CD4-positive, alpha-beta T cell (primary cell): ENCODE measurements at regions of chr11 and their contacts with region 1.

Region 1: GRCh38 chr11:67118801-67119584 is at the start of gene KDM2A:
- DNase-seq: peak; percentile 97 to 100 (median 99)
- ATAC-seq: peak; percentile 80
- H3K4me3 ChIP-seq: peak within 1 kb of the TSS; percentile 94
- H3K4me3 Mint-ChIP-seq: peak within 1 kb of the TSS; percentile 94
- H3K27ac ChIP-seq: peak within 1 kb of the TSS; percentile 77 to 78
- H3K27ac Mint-ChIP-seq: peak within 1 kb of the TSS; percentile 91
- H3K4me1 ChIP-seq: peaks cover 17% of the 10 kb centered on the region
- H3K4me1 Mint-ChIP-seq: peaks cover 35% of the 10 kb centered on the region
- H3K27me3 ChIP-seq: no peaks in the 10 kb centered on the region
- H3K27me3 Mint-ChIP-seq: no peaks in the 10 kb centered on the region
- CTCF ChIP-seq: no peak
- total RNA-seq, gene KDM2A: 410 to 412 TPM

Region 2: GRCh38 chr11:66958232-66958955 is 160.6 kb before region 1 on chr11 and contains the start of gene PC:
- CTCF ChIA-PET with region 1: no interaction called
- POLR2A ChIA-PET with region 1: interaction called, 3 read pairs
- intact Hi-C with region 1: loop called in 1 of 2 experiments (anchors 5 kb)
- DNase-seq: peak; percentile 91 to 99 (median 96)
- ATAC-seq: peak; percentile 96
- H3K4me3 ChIP-seq: peak within 1 kb of the TSS; percentile 57
- H3K4me3 Mint-ChIP-seq: peak within 1 kb of the TSS; percentile 91
- H3K27ac ChIP-seq: peak within 1 kb of the TSS; percentile 33 to 41
- H3K27ac Mint-ChIP-seq: peak within 1 kb of the TSS; percentile 71
- H3K4me1 ChIP-seq: peaks cover 20% of the 10 kb centered on the region
- H3K4me1 Mint-ChIP-seq: peaks cover 21% of the 10 kb centered on the region
- H3K27me3 ChIP-seq: no peaks in the 10 kb centered on the region
- H3K27me3 Mint-ChIP-seq: no peaks in the 10 kb centered on the region
- CTCF ChIP-seq: no peak
- total RNA-seq, gene PC: 5.1 to 7.1 TPM

Region 3: DNA sequence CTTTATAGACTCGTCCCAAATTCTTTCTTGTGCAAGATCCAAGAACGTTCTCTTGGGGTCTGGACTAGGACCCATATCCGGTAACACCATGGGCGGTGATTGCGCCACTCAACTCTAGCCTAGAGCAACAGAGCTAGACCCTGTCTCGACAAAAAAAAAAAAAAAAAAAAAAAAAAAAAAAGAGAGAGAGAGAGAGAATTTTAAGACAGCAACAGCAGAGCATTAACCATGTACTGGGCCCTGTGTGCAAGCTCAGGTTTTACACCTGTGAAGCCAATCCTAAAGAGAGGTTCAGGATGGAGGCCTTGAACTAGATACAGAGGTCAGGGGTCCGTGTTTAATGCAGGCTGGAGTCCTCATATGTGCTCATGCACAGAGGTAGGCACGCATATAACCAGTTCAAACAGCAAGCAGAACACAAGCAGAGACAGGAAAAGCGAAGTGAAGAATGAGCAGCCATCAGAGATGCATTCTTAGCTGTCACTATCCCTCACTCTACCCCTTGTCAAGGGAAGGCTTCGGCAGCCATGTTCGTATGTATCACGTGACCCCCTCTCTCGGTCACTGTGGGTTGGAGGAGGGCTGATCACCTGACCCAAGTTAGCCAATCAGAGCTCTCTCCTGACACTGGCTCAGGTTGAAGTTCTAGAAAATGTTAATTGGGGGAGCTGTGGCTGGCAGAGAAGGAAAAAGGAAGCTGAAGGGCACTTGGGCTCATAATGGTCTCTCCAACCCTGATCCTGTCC is 112.7 kb before region 1 on chr11:
- CTCF ChIA-PET with region 1: no interaction called
- POLR2A ChIA-PET with region 1: no interaction called
- intact Hi-C with region 1: no loop called
- DNase-seq: peak in 3 of 14 experiments; percentile 16 to 56 (median 28)
- ATAC-seq: no peak
- H3K4me3 ChIP-seq: no peak overlapping the region
- H3K4me3 Mint-ChIP-seq: no peak overlapping the region
- H3K27ac ChIP-seq: no peak overlapping the region
- H3K27ac Mint-ChIP-seq: no peak overlapping the region
- H3K4me1 ChIP-seq: no peaks in the 10 kb centered on the region
- H3K4me1 Mint-ChIP-seq: no peaks in the 10 kb centered on the region
- H3K27me3 ChIP-seq: no peaks in the 10 kb centered on the region
- H3K27me3 Mint-ChIP-seq: no peaks in the 10 kb centered on the region
- CTCF ChIP-seq: no peak

Region 4: DNA sequence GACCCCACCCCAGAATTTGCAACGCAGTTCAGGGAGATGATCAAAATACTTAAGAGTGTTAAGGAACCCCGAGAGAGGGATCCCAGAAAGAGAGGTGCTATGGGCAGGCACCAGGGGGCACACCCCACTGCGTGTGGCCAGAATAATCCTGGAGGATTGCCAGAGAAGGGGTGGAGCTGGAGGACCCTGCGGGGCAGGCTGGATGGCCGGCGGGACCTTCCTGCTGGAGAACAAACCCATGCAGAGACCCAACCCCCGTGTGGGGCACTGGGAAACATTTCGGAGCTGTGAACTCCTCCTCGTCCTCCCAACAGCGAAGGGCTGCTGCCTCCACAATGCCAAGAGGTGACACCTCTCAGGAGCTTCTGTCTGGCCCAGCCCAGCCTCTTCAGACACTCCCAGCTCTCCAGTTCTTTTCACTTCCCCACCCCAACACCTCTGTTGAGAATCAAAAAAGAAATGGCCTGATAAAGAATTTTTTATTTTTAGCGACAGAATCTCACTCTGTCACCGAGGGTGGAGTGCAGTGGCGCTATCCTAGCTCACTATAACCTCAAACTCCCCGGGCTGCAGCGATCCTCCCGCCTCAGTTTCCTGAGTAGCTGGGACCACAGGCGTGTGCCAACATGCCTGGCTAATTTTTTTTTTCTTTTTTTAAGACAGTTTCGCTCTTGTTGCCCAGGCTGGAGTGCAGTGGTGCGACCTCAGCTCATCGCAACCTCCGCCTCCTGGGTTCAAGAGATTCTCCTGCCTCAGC is 36.8 kb before region 1 on chr11:
- CTCF ChIA-PET with region 1: interaction called, 3 read pairs
- POLR2A ChIA-PET with region 1: interaction called, 7 read pairs
- intact Hi-C with region 1: loop called (anchors 5 kb)
- DNase-seq: peak in 4 of 14 experiments; percentile 10 to 39 (median 21)
- ATAC-seq: peak; percentile 37
- H3K4me3 ChIP-seq: no peak overlapping the region
- H3K4me3 Mint-ChIP-seq: no peak overlapping the region
- H3K27ac ChIP-seq: no peak overlapping the region
- H3K27ac Mint-ChIP-seq: no peak overlapping the region
- H3K4me1 ChIP-seq: peaks cover 12% of the 10 kb centered on the region
- H3K4me1 Mint-ChIP-seq: peaks cover 11% of the 10 kb centered on the region
- H3K27me3 ChIP-seq: no peaks in the 10 kb centered on the region
- H3K27me3 Mint-ChIP-seq: peaks cover 11% of the 10 kb centered on the region
- CTCF ChIP-seq: no peak

Region 5: DNA sequence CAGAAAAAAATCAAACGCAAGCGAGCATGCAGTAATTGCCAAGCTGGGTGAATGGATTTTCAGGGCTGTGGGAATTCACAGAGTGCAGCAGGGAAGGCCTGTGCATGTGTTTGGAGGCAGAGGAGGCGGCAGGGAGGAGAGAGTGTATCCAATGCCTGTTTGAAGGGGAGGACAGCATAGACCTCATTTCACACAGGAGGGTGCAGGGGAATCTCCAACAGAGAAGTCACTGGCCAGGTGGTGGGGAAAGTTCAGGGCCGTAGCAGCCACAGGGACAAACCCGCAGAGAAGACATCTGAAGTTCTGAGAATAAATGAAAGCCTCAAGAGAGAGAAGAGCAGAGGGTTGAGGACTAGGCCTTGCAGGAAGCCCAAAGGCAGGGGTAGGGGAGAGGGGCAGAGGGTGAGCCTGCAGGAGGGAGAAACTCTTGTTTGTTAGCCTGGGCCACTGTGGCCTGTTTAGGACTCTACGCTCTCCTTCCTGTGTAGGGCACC is 19.1 kb before region 1 on chr11:
- CTCF ChIA-PET with region 1: interaction called, 3 read pairs
- POLR2A ChIA-PET with region 1: interaction called, 18 read pairs
- intact Hi-C with region 1: loop called in 1 of 2 experiments (anchors 1 kb)
- DNase-seq: no peak
- ATAC-seq: no peak
- H3K4me3 ChIP-seq: no peak overlapping the region
- H3K4me3 Mint-ChIP-seq: no peak overlapping the region
- H3K27ac ChIP-seq: no peak overlapping the region
- H3K27ac Mint-ChIP-seq: peak overlapping the region; percentile 73
- H3K4me1 ChIP-seq: peaks cover 25% of the 10 kb centered on the region
- H3K4me1 Mint-ChIP-seq: peaks cover 36% of the 10 kb centered on the region
- H3K27me3 ChIP-seq: no peaks in the 10 kb centered on the region
- H3K27me3 Mint-ChIP-seq: no peaks in the 10 kb centered on the region
- CTCF ChIP-seq: no peak

Region 6: GRCh38 chr11:67160874-67161783 is 42.1 kb after region 1 on chr11:
- CTCF ChIA-PET with region 1: interaction called, 3 read pairs
- POLR2A ChIA-PET with region 1: interaction called, 4 read pairs
- intact Hi-C with region 1: loop called (anchors 5 kb)
- DNase-seq: peak in 1 of 14 experiments; percentile 7
- ATAC-seq: peak; percentile 34
- H3K4me3 ChIP-seq: no peak overlapping the region
- H3K4me3 Mint-ChIP-seq: no peak overlapping the region
- H3K27ac ChIP-seq: peak overlapping the region in 1 of 2 donors; percentile 37
- H3K27ac Mint-ChIP-seq: peak overlapping the region; percentile 76
- H3K4me1 ChIP-seq: peaks cover 8% of the 10 kb centered on the region
- H3K4me1 Mint-ChIP-seq: peaks cover 73% of the 10 kb centered on the region
- H3K27me3 ChIP-seq: no peaks in the 10 kb centered on the region
- H3K27me3 Mint-ChIP-seq: no peaks in the 10 kb centered on the region
- CTCF ChIP-seq: no peak

Region 7: DNA sequence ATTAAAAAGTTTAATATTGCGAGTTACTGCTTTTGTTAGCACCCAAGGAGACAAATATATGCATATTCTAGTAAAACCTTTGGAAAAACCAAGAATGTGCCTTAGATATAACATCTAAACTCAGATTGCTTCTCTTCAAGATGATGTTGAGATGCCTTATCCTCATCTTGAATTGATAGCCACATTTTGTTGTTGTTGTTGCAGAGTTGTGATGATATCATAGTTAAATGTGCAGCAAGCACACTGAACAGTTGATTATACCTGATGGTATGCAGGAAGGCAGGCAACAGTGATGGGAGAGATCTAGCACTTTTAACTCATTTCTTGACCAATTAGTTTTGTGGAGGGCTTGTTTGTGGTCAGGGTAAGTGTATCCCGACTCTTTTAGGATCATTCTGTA is 48.1 kb after region 1 on chr11:
- CTCF ChIA-PET with region 1: interaction called, 6 read pairs
- POLR2A ChIA-PET with region 1: interaction called, 5 read pairs
- intact Hi-C with region 1: loop called (anchors 5 kb)
- DNase-seq: no peak
- ATAC-seq: no peak
- H3K4me3 ChIP-seq: no peak overlapping the region
- H3K4me3 Mint-ChIP-seq: no peak overlapping the region
- H3K27ac ChIP-seq: no peak overlapping the region
- H3K27ac Mint-ChIP-seq: peak overlapping the region; percentile 1
- H3K4me1 ChIP-seq: no peaks in the 10 kb centered on the region
- H3K4me1 Mint-ChIP-seq: peaks cover 64% of the 10 kb centered on the region
- H3K27me3 ChIP-seq: no peaks in the 10 kb centered on the region
- H3K27me3 Mint-ChIP-seq: no peaks in the 10 kb centered on the region
- CTCF ChIP-seq: no peak

Region 8: DNA sequence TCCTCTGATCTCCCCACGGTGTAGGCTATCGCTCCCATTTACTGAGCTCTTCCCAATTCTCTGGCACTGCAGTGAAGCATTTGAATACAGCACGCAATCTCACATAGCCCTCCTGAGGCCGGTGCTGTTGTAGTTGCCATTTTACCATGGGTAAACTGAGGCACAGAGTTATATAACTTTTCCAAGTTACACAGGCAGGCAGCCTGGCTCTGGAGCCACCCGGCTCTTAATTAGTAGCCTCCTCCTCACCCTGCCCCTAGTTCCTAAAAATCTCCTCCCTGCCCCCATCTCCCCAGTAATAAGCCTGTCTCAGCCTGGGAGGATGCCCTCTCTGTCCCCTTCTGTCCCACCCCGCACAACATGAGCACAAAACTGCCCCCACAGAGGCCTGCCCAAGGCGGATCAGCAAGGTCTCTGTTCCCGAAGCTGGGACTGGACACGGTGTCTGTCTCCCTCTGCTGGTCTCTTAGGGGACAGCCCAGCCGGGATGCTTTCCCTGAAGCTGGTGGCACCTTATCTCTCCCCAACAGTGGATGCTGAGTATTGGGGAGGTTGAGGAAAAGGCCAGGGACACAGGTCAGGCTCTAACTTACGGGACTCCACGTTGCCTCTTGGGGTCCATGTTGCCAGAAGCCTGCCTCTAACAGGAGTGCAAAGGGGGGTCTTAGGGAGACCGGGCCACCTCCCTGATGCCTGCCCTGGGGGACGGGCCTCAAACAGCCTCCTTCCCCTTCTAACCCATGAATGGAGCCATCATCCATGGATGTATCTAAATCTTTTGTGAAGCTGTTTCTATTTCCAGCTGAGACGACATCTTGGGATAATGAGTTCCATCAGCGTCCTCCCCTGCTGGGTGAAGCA is 263.5 kb after region 1 on chr11:
- CTCF ChIA-PET with region 1: interaction called, 3 read pairs
- POLR2A ChIA-PET with region 1: no interaction called
- intact Hi-C with region 1: loop called in 1 of 2 experiments (anchors 10 kb)
- DNase-seq: peak; percentile 72 to 90 (median 82)
- ATAC-seq: peak; percentile 99
- H3K4me3 ChIP-seq: no peak overlapping the region
- H3K4me3 Mint-ChIP-seq: no peak overlapping the region
- H3K27ac ChIP-seq: no peak overlapping the region
- H3K27ac Mint-ChIP-seq: no peak overlapping the region
- H3K4me1 ChIP-seq: peaks cover 15% of the 10 kb centered on the region
- H3K4me1 Mint-ChIP-seq: peaks cover 5% of the 10 kb centered on the region
- H3K27me3 ChIP-seq: no peaks in the 10 kb centered on the region
- H3K27me3 Mint-ChIP-seq: peaks cover 4% of the 10 kb centered on the region
- CTCF ChIP-seq: peak; percentile 92